ENCODE measurements at regions of chr1 and their contacts with region 1.

Region 1: DNA sequence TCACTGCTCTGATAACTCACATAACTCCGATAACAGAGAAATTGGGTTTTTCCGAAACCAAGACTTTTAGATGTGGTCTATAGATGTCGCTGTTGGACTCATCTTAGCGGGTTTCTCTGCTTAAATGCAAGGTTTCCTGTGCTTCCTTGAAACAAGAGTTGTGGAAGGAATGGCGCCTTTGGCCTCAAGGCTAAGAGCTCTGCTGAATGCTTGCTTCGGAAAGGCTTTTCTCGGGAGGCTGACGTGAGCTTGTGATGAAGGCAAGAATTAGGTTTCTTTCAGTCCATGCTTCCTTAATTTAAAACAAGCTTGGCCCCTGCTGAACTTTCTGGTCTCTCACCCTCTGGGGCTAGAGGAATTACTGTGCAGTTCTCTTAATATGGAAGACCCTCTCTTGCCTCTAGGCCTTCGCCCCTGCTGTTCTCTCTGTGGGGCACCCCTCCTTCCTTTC is 113.5 kb downstream of the MAP3K21 start:
- DNase-seq: peak; percentile 38
- ATAC-seq: peak; percentile 84
- H3K4me3 ChIP-seq: no peak overlapping the region
- H3K27ac ChIP-seq: no peak overlapping the region
- H3K4me1 ChIP-seq: no peaks in the 10 kb centered on the region
- H3K27me3 ChIP-seq: peaks cover 10% of the 10 kb centered on the region; the same call in 1 of the 2 replicates
- CTCF ChIP-seq: peak; percentile 77

Region 2: GRCh38 chr1:232769733-232770132 is 671.2 kb before region 1 on chr1:
- CTCF ChIA-PET with region 1: no interaction called
- POLR2A ChIA-PET with region 1: no interaction called
- in situ Hi-C with region 1: no loop called
- intact Hi-C with region 1: no loop called
- DNase-seq: no peak
- ATAC-seq: no peak
- H3K4me3 ChIP-seq: no peak overlapping the region
- H3K27ac ChIP-seq: no peak overlapping the region
- H3K4me1 ChIP-seq: no peaks in the 10 kb centered on the region
- H3K27me3 ChIP-seq: no peaks in the 10 kb centered on the region
- CTCF ChIP-seq: no peak

Region 3: GRCh38 chr1:234065794-234066447 is 624.9 kb after region 1 on chr1:
- CTCF ChIA-PET with region 1: interaction called, 4 read pairs
- POLR2A ChIA-PET with region 1: no interaction called
- in situ Hi-C with region 1: no loop called
- intact Hi-C with region 1: loop called (anchors 2 kb)
- DNase-seq: no peak
- ATAC-seq: peak; percentile 87
- H3K4me3 ChIP-seq: no peak overlapping the region
- H3K27ac ChIP-seq: no peak overlapping the region
- H3K4me1 ChIP-seq: no peaks in the 10 kb centered on the region
- H3K27me3 ChIP-seq: no peaks in the 10 kb centered on the region
- CTCF ChIP-seq: peak; percentile 91